GM12878 (cell line): ENCODE measurements at regions of chr2 and their contacts with region 1.

Region 1: GRCh38 chr2:119352357-119352756 is 14.3 kb downstream of the C2orf76 start:
- DNase-seq: peak; percentile 93
- ATAC-seq: peak; percentile 95
- H3K4me3 ChIP-seq: no peak overlapping the region
- H3K27ac ChIP-seq: peak overlapping the region; percentile 91
- H3K4me1 ChIP-seq: peaks cover 38% of the 10 kb centered on the region
- H3K27me3 ChIP-seq: no peaks in the 10 kb centered on the region
- CTCF ChIP-seq: no peak
- EP300 ChIP-seq: peak; percentile 66 to 84
- POLR2A ChIP-seq: no peak
- RAD21 ChIP-seq: no peak; the same call in 1 of the 2 replicates

Region 2: DNA sequence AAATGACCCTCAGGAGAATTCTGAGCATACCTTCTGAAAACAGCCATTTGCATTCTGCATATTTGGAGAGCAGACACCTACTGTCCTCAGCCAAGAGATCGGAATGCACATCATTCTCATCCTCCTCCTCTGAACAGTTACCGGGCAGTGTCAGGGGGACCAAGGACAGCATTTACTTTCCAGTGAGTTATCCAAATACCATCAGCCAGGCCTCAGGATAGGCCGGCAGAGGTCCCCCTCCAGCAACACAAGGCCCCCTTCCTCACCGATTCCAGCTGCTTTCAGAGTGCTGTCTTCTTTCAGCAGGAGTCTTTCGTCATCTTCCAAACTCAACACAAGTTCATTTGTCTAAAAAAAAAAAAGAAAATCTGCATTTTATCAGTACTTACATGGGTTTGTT is 41.0 kb before region 1 on chr2:
- CTCF ChIA-PET with region 1: interaction called, 3 read pairs
- POLR2A ChIA-PET with region 1: no interaction called
- RAD21 ChIA-PET with region 1: interaction called, 17 read pairs
- SMC1A ChIA-PET with region 1: interaction called, 10 read pairs
- in situ Hi-C with region 1: no loop called
- intact Hi-C with region 1: no loop called
- DNase-seq: no peak
- ATAC-seq: peak; percentile 31; the same call in 2 of the 3 replicates
- H3K4me3 ChIP-seq: no peak overlapping the region
- H3K27ac ChIP-seq: no peak overlapping the region; the same call in 1 of the 2 replicates
- H3K4me1 ChIP-seq: peaks cover 27% of the 10 kb centered on the region
- H3K27me3 ChIP-seq: no peaks in the 10 kb centered on the region
- CTCF ChIP-seq: no peak
- EP300 ChIP-seq: no peak
- POLR2A ChIP-seq: no peak
- RAD21 ChIP-seq: peak; percentile 62

Region 3: DNA sequence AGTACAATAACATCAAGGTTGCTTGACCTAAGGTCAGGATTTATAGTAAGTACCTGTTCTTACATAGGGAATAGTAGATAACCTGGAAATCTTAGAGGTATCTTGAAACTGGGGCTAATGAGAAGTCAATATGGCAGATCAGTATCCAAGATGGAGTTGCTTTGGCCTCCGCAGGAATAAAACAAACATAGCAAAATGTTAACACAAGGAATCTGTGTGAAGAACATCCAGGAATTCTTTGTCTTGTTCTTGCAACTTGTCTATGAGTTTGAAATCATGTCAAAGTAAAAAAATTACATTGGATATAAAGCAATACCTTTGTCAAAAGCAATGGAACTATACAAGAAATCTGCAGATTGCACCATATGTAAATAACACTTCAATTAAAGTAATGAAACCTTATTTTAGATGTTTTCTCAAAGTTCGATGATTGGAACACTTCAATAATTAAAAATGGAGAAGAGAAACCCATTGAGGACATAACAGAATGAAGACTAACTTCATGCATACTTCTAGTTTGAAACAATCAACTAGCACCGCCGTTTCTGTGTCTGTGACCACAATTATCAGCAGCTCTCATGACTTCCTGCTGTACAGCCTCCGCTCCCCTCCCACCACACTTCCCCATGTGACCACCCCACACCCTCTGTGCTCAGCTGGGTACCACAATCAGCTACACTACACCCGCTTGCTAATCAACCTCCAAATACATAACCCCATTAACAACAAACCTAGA is 13.4 kb before region 1 on chr2:
- CTCF ChIA-PET with region 1: interaction called, 30 read pairs
- POLR2A ChIA-PET with region 1: interaction called, 31 read pairs
- RAD21 ChIA-PET with region 1: interaction called, 44 read pairs
- SMC1A ChIA-PET with region 1: interaction called, 43 read pairs
- in situ Hi-C with region 1: no loop called
- intact Hi-C with region 1: no loop called
- DNase-seq: peak; percentile 48
- ATAC-seq: peak; percentile 100
- H3K4me3 ChIP-seq: no peak overlapping the region
- H3K27ac ChIP-seq: peak overlapping the region; percentile 26; the same call in 1 of the 2 replicates
- H3K4me1 ChIP-seq: peaks cover 17% of the 10 kb centered on the region
- H3K27me3 ChIP-seq: no peaks in the 10 kb centered on the region
- CTCF ChIP-seq: no peak
- EP300 ChIP-seq: peak in 1 of 2 experiments; percentile 48; a peak in 2 of 4 replicates
- POLR2A ChIP-seq: peak; percentile 54
- RAD21 ChIP-seq: no peak

Region 4: GRCh38 chr2:119387381-119388129 is 35.2 kb after region 1 on chr2:
- CTCF ChIA-PET with region 1: interaction called, 8 read pairs
- POLR2A ChIA-PET with region 1: interaction called, 4 read pairs
- RAD21 ChIA-PET with region 1: interaction called, 7 read pairs
- SMC1A ChIA-PET with region 1: interaction called, 18 read pairs
- in situ Hi-C with region 1: no loop called
- intact Hi-C with region 1: no loop called
- DNase-seq: peak; percentile 59
- ATAC-seq: peak; percentile 93
- H3K4me3 ChIP-seq: no peak overlapping the region
- H3K27ac ChIP-seq: peak overlapping the region; percentile 46
- H3K4me1 ChIP-seq: peaks cover 7% of the 10 kb centered on the region
- H3K27me3 ChIP-seq: no peaks in the 10 kb centered on the region
- CTCF ChIP-seq: peak; percentile 30 to 40 (median 32); a peak in 3 of 6 replicates
- EP300 ChIP-seq: peak in 1 of 2 experiments; percentile 32; a peak in 1 of 4 replicates
- POLR2A ChIP-seq: no peak
- RAD21 ChIP-seq: peak; percentile 44